PC-9 (cell line): ENCODE measurements at regions of chr2 and their contacts with region 1.

Region 1: DNA sequence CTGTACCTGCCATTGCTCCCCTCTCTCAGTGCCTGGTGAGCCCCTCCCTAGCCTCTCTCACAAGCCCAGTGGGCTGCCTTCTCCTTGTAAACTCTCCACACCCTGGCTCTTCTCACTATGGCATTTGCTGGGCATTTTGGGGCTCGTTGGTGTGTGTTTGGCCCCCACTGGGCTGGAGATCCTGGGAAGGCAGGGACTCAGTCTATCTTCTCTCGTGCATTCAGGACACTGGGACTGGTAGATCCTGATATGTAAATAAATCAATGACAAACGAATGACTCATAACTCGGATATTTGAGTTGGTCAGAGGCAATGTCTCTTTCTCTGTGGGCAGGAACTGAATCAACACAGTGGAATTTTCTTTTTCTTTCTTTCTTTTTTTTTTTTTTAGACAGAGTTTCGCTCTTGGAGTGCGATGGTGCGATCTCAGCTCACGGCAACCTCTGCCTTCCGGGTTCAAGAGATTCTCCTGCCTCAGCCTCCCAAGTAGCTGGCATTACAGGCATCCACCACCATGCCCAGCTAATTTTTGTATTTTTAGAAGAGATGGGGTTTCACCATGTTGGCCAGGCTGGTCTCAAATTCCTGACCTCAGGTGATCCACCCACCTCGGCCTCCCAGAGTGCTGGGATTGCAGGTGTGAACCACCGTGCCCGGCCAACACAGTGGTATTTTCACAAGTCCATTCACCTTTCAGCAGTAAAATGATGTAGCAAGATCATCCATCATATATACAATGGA is 144.6 kb upstream of the SPRED2 start:
- DNase-seq: peak; percentile 53 to 98
- H3K4me3 ChIP-seq: peak overlapping the region; percentile 21; the same call in 1 of the 2 replicates
- H3K27ac ChIP-seq: peak overlapping the region; percentile 90
- H3K4me1 ChIP-seq: peaks cover 32% of the 10 kb centered on the region
- H3K27me3 ChIP-seq: no peaks in the 10 kb centered on the region
- CTCF ChIP-seq: no peak

Region 2: GRCh38 chr2:64644177-64645004 is 932.6 kb before region 1 on chr2:
- CTCF ChIA-PET with region 1: no interaction called
- POLR2A ChIA-PET with region 1: no interaction called
- intact Hi-C with region 1: loop called (anchors 5 kb)
- DNase-seq: peak; percentile 83 to 85
- H3K4me3 ChIP-seq: peak overlapping the region; percentile 60
- H3K27ac ChIP-seq: peak overlapping the region; percentile 97
- H3K4me1 ChIP-seq: peaks cover 78% of the 10 kb centered on the region
- H3K27me3 ChIP-seq: no peaks in the 10 kb centered on the region
- CTCF ChIP-seq: no peak

Region 3: DNA sequence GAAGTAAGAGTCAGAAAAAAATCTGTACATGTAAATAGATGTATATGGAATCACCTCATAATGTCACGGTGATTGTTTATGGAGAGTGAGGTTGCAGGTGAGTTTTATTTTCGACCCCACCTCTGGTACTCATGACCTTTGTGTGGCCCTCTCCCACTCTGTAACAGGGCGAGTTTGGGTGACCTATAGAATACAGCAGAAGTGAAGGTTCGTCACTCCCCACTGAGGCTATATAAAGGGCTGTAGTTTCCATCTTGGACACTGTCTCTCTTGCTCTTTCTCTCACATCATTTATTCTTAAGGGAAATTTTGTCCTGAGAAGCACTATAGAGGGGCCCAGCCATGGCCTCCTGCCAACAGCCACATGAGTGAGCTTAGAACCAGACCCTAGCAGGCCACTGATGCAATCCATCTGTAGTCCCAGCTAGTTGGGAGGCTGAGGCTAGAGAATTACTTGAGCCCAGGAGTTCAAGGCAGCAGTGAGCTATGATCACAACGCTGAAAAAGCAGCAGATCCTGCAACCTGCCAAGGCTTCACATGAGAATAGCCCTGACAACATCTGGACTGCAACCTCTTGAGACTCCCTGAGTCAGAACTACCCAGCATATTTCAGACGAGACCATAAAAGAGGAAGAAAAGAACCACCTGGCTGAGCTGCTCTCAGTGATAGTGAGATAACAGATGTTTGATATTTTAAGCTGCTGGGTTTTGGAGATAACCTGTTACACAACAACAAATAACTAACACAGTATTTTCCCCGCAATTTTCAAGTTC is 662.1 kb before region 1 on chr2:
- CTCF ChIA-PET with region 1: no interaction called
- POLR2A ChIA-PET with region 1: no interaction called
- intact Hi-C with region 1: loop called (anchors 1 kb)
- DNase-seq: no peak
- H3K4me3 ChIP-seq: no peak overlapping the region
- H3K27ac ChIP-seq: no peak overlapping the region
- H3K4me1 ChIP-seq: no peaks in the 10 kb centered on the region
- H3K27me3 ChIP-seq: no peaks in the 10 kb centered on the region
- CTCF ChIP-seq: no peak

Region 4: DNA sequence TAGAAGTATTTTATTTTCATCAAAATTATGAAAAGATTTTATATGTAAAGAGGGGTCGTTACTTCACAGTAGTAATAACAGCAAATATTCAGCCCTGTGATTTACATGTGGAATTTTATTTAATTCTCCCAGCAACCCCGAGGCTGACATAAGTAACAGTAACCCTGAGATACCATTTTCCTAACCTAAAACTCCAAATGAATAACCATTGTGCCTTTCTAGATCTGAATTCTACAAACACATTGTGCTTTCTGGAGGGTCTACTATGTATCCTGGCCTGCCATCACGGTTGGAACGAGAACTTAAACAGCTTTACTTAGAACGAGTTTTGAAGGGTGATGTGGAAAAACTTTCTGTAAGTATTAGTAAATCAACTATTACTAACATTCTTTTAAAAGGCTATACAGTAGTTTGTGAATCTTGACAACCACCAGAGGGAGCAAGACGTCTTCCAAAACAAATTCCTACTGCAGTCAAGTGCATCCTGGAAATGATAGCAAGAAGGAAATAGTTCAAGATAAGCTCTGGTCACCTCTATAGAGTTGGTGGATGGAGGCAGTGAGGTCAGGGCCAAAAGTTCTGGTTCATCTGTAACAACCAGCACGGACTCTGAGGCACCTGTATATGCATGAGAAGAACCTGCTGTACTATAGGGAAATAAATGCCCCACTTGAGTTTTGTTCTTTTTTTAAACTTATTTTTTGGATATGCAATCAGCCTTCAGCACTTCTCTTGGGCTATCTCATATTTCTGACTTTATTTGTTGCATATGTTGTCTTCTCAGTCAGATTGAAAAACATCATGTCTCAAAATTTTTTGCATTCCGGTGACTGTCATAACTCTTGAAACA is 312.0 kb before region 1 on chr2:
- CTCF ChIA-PET with region 1: interaction called, 3 read pairs
- POLR2A ChIA-PET with region 1: no interaction called
- intact Hi-C with region 1: loop called (anchors 1 kb)
- DNase-seq: peak; percentile 38 to 76
- H3K4me3 ChIP-seq: no peak overlapping the region
- H3K27ac ChIP-seq: no peak overlapping the region
- H3K4me1 ChIP-seq: peaks cover 9% of the 10 kb centered on the region; the same call in 1 of the 2 replicates
- H3K27me3 ChIP-seq: no peaks in the 10 kb centered on the region
- CTCF ChIP-seq: peak; percentile 92

Region 5: GRCh38 chr2:65639156-65639864 is 62.3 kb after region 1 on chr2:
- CTCF ChIA-PET with region 1: interaction called, 10 read pairs
- POLR2A ChIA-PET with region 1: no interaction called
- intact Hi-C with region 1: no loop called
- DNase-seq: no peak
- H3K4me3 ChIP-seq: no peak overlapping the region
- H3K27ac ChIP-seq: no peak overlapping the region
- H3K4me1 ChIP-seq: no peaks in the 10 kb centered on the region
- H3K27me3 ChIP-seq: no peaks in the 10 kb centered on the region
- CTCF ChIP-seq: no peak